ENCODE measurements at regions of chr14 and their contacts with region 1.

Region 1: GRCh38 chr14:92783816-92784431 is 10.2 kb upstream of the GOLGA5 start:
- H3K4me3 Mint-ChIP-seq: no peak overlapping the region
- H3K27ac Mint-ChIP-seq: peak overlapping the region; percentile 60
- H3K4me1 Mint-ChIP-seq: peaks cover 53% of the 10 kb centered on the region
- H3K27me3 Mint-ChIP-seq: no peaks in the 10 kb centered on the region

Region 2: DNA sequence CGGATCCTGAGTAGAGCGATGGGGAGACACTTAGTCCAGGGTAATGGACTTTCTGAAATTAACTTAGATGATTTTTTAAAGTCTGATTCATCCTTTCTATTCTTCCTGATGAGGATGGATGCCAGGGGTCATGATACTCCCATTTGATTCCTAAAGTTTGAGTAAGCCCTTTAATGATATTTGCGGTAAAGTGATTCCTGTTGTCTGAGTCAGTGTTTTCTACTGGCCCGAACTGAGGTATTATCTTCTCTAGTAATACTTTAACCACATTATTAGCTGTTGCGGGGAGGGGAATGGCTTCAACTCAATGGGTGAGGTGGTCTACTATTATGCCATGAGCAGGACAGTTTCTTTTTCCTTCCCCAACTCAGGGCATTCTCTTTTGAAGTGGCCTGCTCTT is 158.7 kb before region 1 on chr14:
- intact Hi-C with region 1: no loop called
- H3K4me3 Mint-ChIP-seq: no peak overlapping the region
- H3K27ac Mint-ChIP-seq: no peak overlapping the region
- H3K4me1 Mint-ChIP-seq: peaks cover 22% of the 10 kb centered on the region
- H3K27me3 Mint-ChIP-seq: no peaks in the 10 kb centered on the region

Region 3: DNA sequence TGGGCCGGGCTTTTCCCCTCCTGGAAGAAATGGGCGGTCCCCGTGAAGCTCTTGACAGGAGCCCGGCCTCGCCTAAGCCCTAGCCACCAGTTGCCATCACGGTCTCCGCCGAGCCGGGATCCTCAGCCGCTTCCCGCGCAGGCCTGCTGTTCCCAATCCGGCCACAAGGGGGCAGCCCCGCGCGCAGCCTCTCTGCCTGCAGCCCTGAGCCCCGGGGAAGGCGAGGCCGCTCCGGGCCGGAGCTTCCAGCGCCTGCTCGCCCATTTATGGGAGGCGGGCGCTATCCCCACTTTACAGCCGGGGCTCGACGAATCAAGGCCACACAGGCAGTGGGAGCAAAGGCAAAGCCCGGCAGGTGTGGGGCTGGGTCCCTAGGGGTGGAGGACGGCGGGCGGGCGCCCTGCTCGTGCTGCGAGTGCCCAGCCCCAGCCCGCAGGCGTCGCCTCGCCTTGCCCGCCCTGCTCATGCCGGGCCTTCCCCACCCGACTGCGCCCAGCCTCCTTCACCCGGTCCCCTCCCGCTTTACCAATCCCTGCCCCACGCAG is 97.0 kb before region 1 on chr14:
- intact Hi-C with region 1: loop called (anchors 2 kb)
- H3K4me3 Mint-ChIP-seq: no peak overlapping the region
- H3K27ac Mint-ChIP-seq: peak overlapping the region; percentile 52
- H3K4me1 Mint-ChIP-seq: peaks cover 43% of the 10 kb centered on the region
- H3K27me3 Mint-ChIP-seq: no peaks in the 10 kb centered on the region

Region 4: DNA sequence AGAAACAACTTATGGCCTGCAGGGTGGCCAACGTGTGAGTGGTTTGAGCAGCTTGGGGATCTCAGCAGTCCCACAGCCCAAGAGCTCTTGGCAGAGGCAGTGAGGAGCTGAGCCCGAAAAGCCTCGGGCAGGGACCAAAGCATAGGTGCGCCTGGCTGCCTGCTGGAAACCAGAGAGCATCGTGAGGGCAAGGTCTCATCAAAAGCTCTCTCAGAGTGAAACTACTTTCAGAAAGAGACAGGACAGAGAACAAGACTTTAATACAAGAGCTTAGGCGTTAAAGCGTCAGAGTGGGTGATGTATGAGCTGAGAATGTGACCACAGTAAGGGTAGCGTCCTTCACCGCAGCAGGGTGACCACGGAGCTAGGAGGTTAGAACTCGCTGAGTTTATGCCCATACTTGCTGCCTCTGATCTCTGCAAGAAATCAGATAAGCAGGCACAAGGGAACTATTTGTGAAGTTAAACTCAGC is 66.3 kb before region 1 on chr14:
- intact Hi-C with region 1: loop called (anchors 1 kb)
- H3K4me3 Mint-ChIP-seq: no peak overlapping the region
- H3K27ac Mint-ChIP-seq: no peak overlapping the region
- H3K4me1 Mint-ChIP-seq: peaks cover 14% of the 10 kb centered on the region
- H3K27me3 Mint-ChIP-seq: peaks cover 8% of the 10 kb centered on the region

Region 5: DNA sequence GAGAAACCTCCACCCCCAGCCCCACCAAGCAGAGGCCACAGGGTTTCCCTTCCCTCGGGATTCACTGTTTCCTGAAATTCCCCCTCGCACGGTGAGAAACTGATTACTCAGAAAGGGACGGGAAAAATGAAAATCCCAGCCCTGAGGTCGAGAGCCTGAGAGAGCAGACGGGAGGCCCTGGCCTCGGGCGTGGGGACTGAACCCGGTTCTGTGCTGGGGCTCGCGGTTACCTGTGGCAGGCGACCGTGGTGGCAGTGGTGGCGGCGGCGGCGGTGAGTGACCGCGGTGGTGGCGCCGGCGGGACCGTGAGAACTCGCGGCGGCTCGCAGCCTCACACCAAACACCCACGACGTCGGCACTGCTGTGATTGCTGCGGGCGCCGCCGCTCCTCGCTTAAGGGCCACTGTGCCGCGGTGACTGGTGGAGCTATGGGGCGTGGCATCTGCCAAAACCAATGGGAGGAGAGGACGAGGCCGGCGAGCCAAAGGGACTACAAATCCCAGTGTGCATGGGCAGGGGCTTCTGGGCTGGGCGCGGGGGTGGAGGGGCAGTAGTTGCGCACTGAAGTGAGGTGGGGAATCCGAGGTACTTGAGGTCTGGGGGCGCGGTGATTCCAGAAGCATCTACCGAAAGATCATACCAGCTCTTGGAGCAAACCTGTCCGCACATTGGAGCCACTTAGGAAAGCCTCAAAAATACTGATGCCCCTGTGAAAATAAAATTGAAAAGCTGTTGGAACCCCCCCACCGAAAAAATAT is 35.5 kb before region 1 on chr14 and contains the start of gene LGMN:
- intact Hi-C with region 1: loop called (anchors 2 kb)
- H3K4me3 Mint-ChIP-seq: peak within 1 kb of the TSS; percentile 82
- H3K27ac Mint-ChIP-seq: peak within 1 kb of the TSS; percentile 93
- H3K4me1 Mint-ChIP-seq: peaks cover 65% of the 10 kb centered on the region
- H3K27me3 Mint-ChIP-seq: peaks cover 64% of the 10 kb centered on the region

Measured in dendritic cell treated with granulocyte-macrophage colony-stimulating factor and Interleukin-4, amounts not matched to agents 40 ng/mL and 50 ng/mL, for 4 days (primary cell).